ENCODE measurements at regions of chr3 and their contacts with region 1.

Region 1: DNA sequence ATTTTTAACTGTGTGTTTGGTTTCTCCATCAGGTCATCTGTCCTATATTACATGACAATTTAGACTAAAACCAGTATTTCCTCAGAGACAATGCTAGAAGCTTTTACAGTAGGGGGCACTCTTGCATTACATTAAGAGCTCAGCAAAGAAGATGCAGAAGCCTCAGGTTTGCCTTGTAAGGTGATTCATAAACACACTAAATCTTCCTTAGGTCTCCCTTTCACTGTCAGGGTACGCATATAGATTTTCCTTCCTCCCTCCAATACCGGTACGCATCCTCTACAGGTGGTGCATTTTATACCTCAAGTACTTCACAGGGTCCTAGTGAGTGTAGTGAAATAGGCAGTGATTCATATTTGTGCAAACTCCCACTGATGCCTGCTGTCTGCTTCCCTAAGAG is 46.5 kb downstream of the CD86 start:
- DNase-seq: no peak
- H3K4me3 Mint-ChIP-seq: peak overlapping the region; percentile 7
- H3K27ac Mint-ChIP-seq: peak overlapping the region; percentile 78
- H3K4me1 Mint-ChIP-seq: peaks cover 45% of the 10 kb centered on the region
- H3K27me3 Mint-ChIP-seq: no peaks in the 10 kb centered on the region

Region 2: DNA sequence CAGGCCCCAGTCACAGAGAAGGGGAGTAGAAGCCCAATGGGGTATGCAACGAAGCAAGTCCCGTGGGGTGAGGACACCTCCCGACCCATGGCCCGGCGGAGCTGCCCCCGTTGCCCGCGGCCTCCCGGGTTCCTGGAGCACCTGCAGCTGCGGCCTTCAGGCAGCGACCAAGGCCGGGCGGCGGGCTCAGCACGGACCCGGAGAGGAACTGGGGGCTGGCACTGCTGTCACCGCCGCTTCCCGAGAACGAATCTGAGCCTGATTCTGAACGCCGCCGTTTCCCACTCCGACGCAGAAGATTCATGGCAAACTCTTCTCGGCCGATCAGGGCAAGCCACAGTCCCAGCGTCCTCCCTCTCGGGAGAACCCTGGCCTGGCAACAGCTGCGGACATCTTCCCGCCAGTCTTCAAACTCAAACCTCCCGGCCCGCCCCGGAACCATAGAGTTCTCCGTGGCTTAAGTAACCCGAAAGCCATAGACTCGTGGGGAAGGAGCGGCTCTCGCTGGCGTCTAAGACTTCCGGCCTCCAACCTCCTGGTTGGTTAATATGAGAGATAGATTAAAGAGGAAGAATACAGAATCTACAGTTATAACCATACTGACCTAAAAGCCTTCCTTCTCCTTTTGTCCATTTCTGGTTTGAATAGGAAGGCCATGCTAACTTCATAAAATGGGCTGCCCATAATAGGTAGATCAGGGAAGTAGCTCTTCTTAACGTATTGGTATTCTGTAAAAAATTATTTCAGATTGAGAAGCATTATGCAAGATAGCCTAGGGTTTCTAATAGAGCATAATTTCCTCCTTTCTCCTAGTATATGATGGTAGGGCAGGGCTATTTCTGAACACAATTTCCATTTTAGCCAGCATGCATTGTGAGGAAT is 555.8 kb before region 1 on chr3 and contains the start of gene POLQ:
- CTCF ChIA-PET with region 1: interaction called, 8 read pairs
- POLR2A ChIA-PET with region 1: no interaction called
- intact Hi-C with region 1: loop called (anchors 1 kb)
- DNase-seq: peak; percentile 93
- H3K4me3 Mint-ChIP-seq: peak within 1 kb of the TSS; percentile 86
- H3K27ac Mint-ChIP-seq: peak within 1 kb of the TSS; percentile 92
- H3K4me1 Mint-ChIP-seq: peaks cover 6% of the 10 kb centered on the region
- H3K27me3 Mint-ChIP-seq: no peaks in the 10 kb centered on the region
- total RNA-seq, gene POLQ: 23.9 to 25.1 TPM

Region 3: DNA sequence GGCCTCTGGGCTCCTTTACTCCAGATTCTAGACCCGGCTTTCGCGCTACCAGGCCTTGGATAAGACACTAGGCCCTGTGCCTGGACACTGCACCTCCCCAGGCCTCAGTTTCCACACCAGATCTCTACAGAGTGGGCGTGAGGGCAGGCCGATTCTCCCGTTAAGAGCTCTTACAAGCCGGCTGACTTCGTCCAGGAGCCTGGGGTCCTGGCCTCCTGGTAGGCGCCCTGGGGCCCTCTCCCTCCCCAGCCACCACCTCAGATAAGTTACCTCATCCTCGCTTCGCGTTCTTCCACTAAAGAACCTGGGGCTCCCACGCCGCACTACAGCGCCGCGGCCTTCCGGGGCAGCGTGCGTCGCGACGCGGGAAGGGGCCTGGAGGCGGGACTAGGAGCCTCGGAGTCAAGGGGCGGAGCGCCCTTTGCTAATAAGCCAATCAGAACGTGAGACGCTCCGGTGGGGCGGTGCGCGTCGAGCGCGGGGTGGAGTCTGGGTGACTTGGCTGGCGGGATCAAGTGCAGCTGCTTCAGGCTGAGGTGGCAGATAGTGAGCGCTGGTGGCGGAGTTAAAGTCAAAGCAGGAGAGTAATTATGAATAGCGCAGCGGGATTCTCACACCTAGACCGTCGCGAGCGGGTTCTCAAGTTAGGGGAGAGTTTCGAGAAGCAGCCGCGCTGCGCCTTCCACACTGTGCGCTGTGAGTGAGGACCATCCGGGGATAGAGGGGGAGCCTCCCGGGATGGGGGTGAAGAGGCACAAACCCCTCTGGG is 266.8 kb before region 1 on chr3 and contains the starts of genes EAF2 and IQCB1:
- CTCF ChIA-PET with region 1: no interaction called
- POLR2A ChIA-PET with region 1: interaction called, 5 read pairs
- intact Hi-C with region 1: loop called (anchors 2 kb)
- DNase-seq: peak; percentile 98
- H3K4me3 Mint-ChIP-seq: peak within 1 kb of the TSS; percentile 98
- H3K27ac Mint-ChIP-seq: peak within 1 kb of the TSS; percentile 84
- H3K4me1 Mint-ChIP-seq: peaks cover 37% of the 10 kb centered on the region
- H3K27me3 Mint-ChIP-seq: no peaks in the 10 kb centered on the region
- total RNA-seq, gene EAF2: 14.4 to 14.8 TPM
- total RNA-seq, gene IQCB1: 36.8 to 37.3 TPM

Region 4: GRCh38 chr3:122146466-122146865 is 44.8 kb after region 1 on chr3:
- CTCF ChIA-PET with region 1: interaction called, 13 read pairs
- POLR2A ChIA-PET with region 1: interaction called, 9 read pairs
- intact Hi-C with region 1: loop called (anchors 1 kb)
- DNase-seq: peak; percentile 90
- H3K4me3 Mint-ChIP-seq: no peak overlapping the region
- H3K27ac Mint-ChIP-seq: peak overlapping the region; percentile 87
- H3K4me1 Mint-ChIP-seq: peaks cover 34% of the 10 kb centered on the region
- H3K27me3 Mint-ChIP-seq: peaks cover 3% of the 10 kb centered on the region

Region 5: DNA sequence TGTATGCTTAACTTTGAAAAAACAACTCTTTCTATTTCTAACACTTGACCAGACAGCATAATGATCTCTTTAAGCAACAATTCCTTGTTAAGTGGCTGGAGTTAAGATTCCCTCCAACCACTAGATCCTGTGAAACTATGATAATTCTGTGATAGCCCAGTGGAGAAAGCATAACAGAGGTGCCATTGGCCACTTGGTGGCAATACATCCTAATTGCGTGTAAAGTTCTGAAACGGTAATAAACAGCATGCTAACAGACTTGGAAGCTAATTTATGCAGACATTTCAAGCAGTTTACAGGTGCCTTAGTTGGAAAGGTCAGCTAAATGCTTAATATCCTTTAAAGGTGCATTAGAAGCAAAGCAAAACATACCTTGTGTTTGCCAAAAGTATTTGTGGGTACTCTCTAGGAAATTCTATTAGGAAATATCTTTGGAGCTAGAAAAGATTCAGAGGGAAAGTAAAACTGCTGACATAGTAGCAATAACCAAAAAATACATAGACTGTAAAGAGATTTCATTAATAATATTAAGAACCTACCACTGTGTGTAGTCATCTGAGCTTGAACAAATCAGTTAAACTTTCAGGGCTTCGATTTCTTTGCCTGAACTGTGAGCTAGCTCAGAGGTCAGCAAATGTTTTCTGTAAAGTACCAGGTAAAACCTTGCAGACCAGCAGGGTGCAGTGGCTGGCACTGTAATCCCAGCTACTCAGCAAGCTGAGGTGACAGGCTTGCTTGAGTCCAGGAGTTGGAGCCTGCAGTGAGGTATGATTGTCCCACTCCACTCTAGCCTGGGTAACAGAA is 204.4 kb after region 1 on chr3:
- CTCF ChIA-PET with region 1: interaction called, 12 read pairs
- POLR2A ChIA-PET with region 1: no interaction called
- intact Hi-C with region 1: no loop called
- DNase-seq: peak; percentile 20
- H3K4me3 Mint-ChIP-seq: no peak overlapping the region
- H3K27ac Mint-ChIP-seq: no peak overlapping the region
- H3K4me1 Mint-ChIP-seq: no peaks in the 10 kb centered on the region
- H3K27me3 Mint-ChIP-seq: no peaks in the 10 kb centered on the region

Region 6: GRCh38 chr3:122392868-122393844 is 291.5 kb after region 1 on chr3:
- CTCF ChIA-PET with region 1: interaction called, 10 read pairs
- POLR2A ChIA-PET with region 1: no interaction called
- intact Hi-C with region 1: no loop called
- DNase-seq: peak; percentile 20
- H3K4me3 Mint-ChIP-seq: no peak overlapping the region
- H3K27ac Mint-ChIP-seq: no peak overlapping the region
- H3K4me1 Mint-ChIP-seq: peaks cover 32% of the 10 kb centered on the region
- H3K27me3 Mint-ChIP-seq: no peaks in the 10 kb centered on the region

Region 7: GRCh38 chr3:122679085-122679881 is 577.6 kb after region 1 on chr3:
- CTCF ChIA-PET with region 1: interaction called, 5 read pairs
- POLR2A ChIA-PET with region 1: no interaction called
- intact Hi-C with region 1: loop called (anchors 5 kb)
- DNase-seq: peak; percentile 90
- H3K4me3 Mint-ChIP-seq: peak overlapping the region; percentile 99
- H3K27ac Mint-ChIP-seq: peak overlapping the region; percentile 96
- H3K4me1 Mint-ChIP-seq: peaks cover 51% of the 10 kb centered on the region
- H3K27me3 Mint-ChIP-seq: no peaks in the 10 kb centered on the region